ENCODE measurements at regions of chr2 and their contacts with region 1.

Region 1: GRCh38 chr2:130873700-130874346 is 37.1 kb downstream of the ARHGEF4 start:
- DNase-seq: peak; percentile 84
- H3K4me3 Mint-ChIP-seq: no peak overlapping the region
- H3K27ac Mint-ChIP-seq: no peak overlapping the region
- H3K4me1 Mint-ChIP-seq: peaks cover 33% of the 10 kb centered on the region
- H3K27me3 Mint-ChIP-seq: no peaks in the 10 kb centered on the region
- CTCF ChIP-seq: peak; percentile 60

Region 2: GRCh38 chr2:130807659-130808385 is 66.0 kb before region 1 on chr2:
- CTCF ChIA-PET with region 1: interaction called, 11 read pairs
- POLR2A ChIA-PET with region 1: interaction called, 24 read pairs
- intact Hi-C with region 1: no loop called
- DNase-seq: peak; percentile 97
- H3K4me3 Mint-ChIP-seq: peak overlapping the region; percentile 66
- H3K27ac Mint-ChIP-seq: peak overlapping the region; percentile 96
- H3K4me1 Mint-ChIP-seq: peaks cover 39% of the 10 kb centered on the region
- H3K27me3 Mint-ChIP-seq: no peaks in the 10 kb centered on the region
- CTCF ChIP-seq: no peak

Region 3: GRCh38 chr2:130836501-130837174 is 37.2 kb before region 1 on chr2 and contains the start of gene ARHGEF4:
- CTCF ChIA-PET with region 1: interaction called, 34 read pairs
- POLR2A ChIA-PET with region 1: interaction called, 17 read pairs
- intact Hi-C with region 1: loop called (anchors 5 kb)
- DNase-seq: peak; percentile 68
- H3K4me3 Mint-ChIP-seq: peak within 1 kb of the TSS; percentile 71
- H3K27ac Mint-ChIP-seq: no peak within 1 kb of the TSS
- H3K4me1 Mint-ChIP-seq: peaks cover 26% of the 10 kb centered on the region
- H3K27me3 Mint-ChIP-seq: no peaks in the 10 kb centered on the region
- CTCF ChIP-seq: no peak
- total RNA-seq, gene ARHGEF4: 52.0 and 59.3 TPM in 2 replicates

Region 4: GRCh38 chr2:130884503-130884902 is 10.7 kb after region 1 on chr2:
- CTCF ChIA-PET with region 1: interaction called, 40 read pairs
- POLR2A ChIA-PET with region 1: interaction called, 7 read pairs
- intact Hi-C with region 1: no loop called
- DNase-seq: no peak
- H3K4me3 Mint-ChIP-seq: no peak overlapping the region
- H3K27ac Mint-ChIP-seq: peak overlapping the region; percentile 49
- H3K4me1 Mint-ChIP-seq: peaks cover 40% of the 10 kb centered on the region
- H3K27me3 Mint-ChIP-seq: no peaks in the 10 kb centered on the region
- CTCF ChIP-seq: no peak

Region 5: GRCh38 chr2:130920415-130921163 is 46.8 kb after region 1 on chr2:
- CTCF ChIA-PET with region 1: interaction called, 72 read pairs
- POLR2A ChIA-PET with region 1: interaction called, 3 read pairs
- intact Hi-C with region 1: loop called (anchors 1 kb)
- DNase-seq: peak; percentile 85
- H3K4me3 Mint-ChIP-seq: no peak overlapping the region
- H3K27ac Mint-ChIP-seq: peak overlapping the region; percentile 61
- H3K4me1 Mint-ChIP-seq: peaks cover 6% of the 10 kb centered on the region
- H3K27me3 Mint-ChIP-seq: no peaks in the 10 kb centered on the region
- CTCF ChIP-seq: peak; percentile 90

Region 6: GRCh38 chr2:131040661-131041401 is 167.0 kb after region 1 on chr2:
- CTCF ChIA-PET with region 1: no interaction called
- POLR2A ChIA-PET with region 1: no interaction called
- intact Hi-C with region 1: no loop called
- DNase-seq: no peak
- H3K4me3 Mint-ChIP-seq: no peak overlapping the region
- H3K27ac Mint-ChIP-seq: no peak overlapping the region
- H3K4me1 Mint-ChIP-seq: no peaks in the 10 kb centered on the region
- H3K27me3 Mint-ChIP-seq: no peaks in the 10 kb centered on the region
- CTCF ChIP-seq: no peak

Region 7: GRCh38 chr2:131093006-131093695 is 219.3 kb after region 1 on chr2 and contains the start of gene FAM168B:
- CTCF ChIA-PET with region 1: interaction called, 6 read pairs
- POLR2A ChIA-PET with region 1: no interaction called
- intact Hi-C with region 1: loop called (anchors 5 kb)
- DNase-seq: peak; percentile 85
- H3K4me3 Mint-ChIP-seq: peak within 1 kb of the TSS; percentile 89
- H3K27ac Mint-ChIP-seq: peak within 1 kb of the TSS; percentile 96
- H3K4me1 Mint-ChIP-seq: peaks cover 6% of the 10 kb centered on the region
- H3K27me3 Mint-ChIP-seq: no peaks in the 10 kb centered on the region
- CTCF ChIP-seq: no peak
- total RNA-seq, gene FAM168B: 159 and 172 TPM in 2 replicates

Measured in MCF 10A (cell line).